ENCODE measurements at regions of chr12 and their contacts with region 1.

Region 1: GRCh38 chr12:109093022-109093918 is at the start of gene ALKBH2:
- DNase-seq: peak; percentile 72
- ATAC-seq: peak; percentile 73
- H3K4me3 ChIP-seq: peak within 1 kb of the TSS; percentile 77
- H3K27ac ChIP-seq: peak within 1 kb of the TSS; percentile 77
- H3K4me1 ChIP-seq: peaks cover 7% of the 10 kb centered on the region
- H3K27me3 ChIP-seq: no peaks in the 10 kb centered on the region
- CTCF ChIP-seq: peak; percentile 98 to 99 (median 98); a peak in 5 of 6 replicates
- EP300 ChIP-seq: no peak
- POLR2A ChIP-seq: peak; percentile 97
- RAD21 ChIP-seq: peak; percentile 75
- polyA plus RNA-seq, gene ALKBH2: 5.6 to 8.8 TPM

Region 2: DNA sequence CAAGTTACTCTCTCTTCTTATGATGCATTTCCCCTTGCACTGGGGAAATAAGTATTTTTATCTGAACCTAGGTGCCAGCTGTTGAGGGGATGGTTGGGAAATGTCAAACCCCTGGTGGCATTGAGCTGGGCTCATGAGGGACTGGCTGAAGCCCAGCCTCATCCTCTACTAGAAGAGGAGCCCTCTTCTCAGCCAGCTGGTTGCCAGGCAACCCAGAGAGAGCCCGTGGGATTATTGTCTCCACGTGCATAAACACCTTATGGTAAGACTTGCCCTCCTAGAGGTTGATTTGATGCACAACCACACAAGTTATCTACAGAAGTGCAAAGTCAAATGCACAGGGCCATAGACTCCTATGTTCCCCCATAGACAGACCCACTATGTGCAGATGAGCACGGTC is 874.3 kb before region 1 on chr12:
- CTCF ChIA-PET with region 1: no interaction called
- POLR2A ChIA-PET with region 1: no interaction called
- RAD21 ChIA-PET with region 1: no interaction called
- SMC1A ChIA-PET with region 1: no interaction called
- in situ Hi-C with region 1: no loop called
- intact Hi-C with region 1: no loop called
- DNase-seq: no peak
- ATAC-seq: no peak
- H3K4me3 ChIP-seq: no peak overlapping the region
- H3K27ac ChIP-seq: no peak overlapping the region
- H3K4me1 ChIP-seq: no peaks in the 10 kb centered on the region
- H3K27me3 ChIP-seq: peaks cover 0 to 2% of the 10 kb centered on the region in 2 experiments; a peak in 2 of 4 replicates
- CTCF ChIP-seq: no peak
- EP300 ChIP-seq: no peak
- POLR2A ChIP-seq: no peak
- RAD21 ChIP-seq: no peak

Region 3: DNA sequence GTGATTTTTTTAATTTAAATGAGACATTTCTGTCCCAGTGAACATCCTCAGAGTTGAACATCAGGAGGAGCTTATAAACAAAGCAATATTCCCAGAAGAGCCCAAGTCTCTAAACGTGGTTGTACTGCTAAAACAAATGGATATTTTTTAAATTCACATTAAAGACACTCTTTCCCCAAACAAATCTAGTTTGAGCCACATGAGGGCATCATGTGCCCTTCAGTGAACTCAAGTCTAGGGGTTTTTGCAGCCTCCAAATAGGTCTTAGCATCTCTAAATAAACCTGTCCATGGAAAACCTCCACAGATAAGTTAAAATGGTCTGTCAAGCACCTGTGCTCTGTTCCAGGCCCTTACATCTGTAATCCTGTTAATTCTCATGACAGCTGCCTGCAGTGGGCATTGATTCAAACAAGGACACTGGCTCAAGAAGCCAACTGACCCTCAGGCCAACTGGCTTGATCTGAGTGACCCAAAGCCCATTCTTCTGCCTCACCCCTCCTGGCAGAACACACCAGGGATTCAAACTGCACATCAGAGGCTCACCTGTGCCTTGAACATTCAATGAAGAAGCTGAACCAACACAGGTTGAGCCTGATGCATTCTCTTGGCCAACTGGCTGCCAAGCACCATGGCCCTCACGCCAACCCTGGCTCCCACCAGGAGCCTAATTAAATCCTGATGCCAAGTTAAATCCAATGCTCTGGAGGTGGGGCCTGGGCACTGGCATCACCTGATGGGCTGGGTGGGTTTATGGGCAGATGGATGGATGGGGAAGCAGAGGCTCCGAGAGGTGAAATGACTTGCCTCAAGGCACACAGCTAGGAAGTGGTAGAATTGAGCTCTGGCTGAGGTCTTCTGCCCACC is 522.3 kb before region 1 on chr12:
- CTCF ChIA-PET with region 1: interaction called, 3 read pairs
- POLR2A ChIA-PET with region 1: no interaction called
- RAD21 ChIA-PET with region 1: interaction called, 5 read pairs
- SMC1A ChIA-PET with region 1: no interaction called
- in situ Hi-C with region 1: loop called (anchors 5 kb)
- intact Hi-C with region 1: loop called (anchors 2 kb)
- DNase-seq: no peak
- ATAC-seq: no peak
- H3K4me3 ChIP-seq: no peak overlapping the region
- H3K27ac ChIP-seq: peak overlapping the region; percentile 100
- H3K4me1 ChIP-seq: peaks cover 89% of the 10 kb centered on the region
- H3K27me3 ChIP-seq: no peaks in the 10 kb centered on the region
- CTCF ChIP-seq: peak; percentile 42 to 53 (median 49); a peak in 4 of 6 replicates
- EP300 ChIP-seq: 0 out of 4 replicates have a peak, but pooled peaks of 1 of the 2 experiments have one; percentile 10
- POLR2A ChIP-seq: no peak
- RAD21 ChIP-seq: peak; percentile 66

Region 4: DNA sequence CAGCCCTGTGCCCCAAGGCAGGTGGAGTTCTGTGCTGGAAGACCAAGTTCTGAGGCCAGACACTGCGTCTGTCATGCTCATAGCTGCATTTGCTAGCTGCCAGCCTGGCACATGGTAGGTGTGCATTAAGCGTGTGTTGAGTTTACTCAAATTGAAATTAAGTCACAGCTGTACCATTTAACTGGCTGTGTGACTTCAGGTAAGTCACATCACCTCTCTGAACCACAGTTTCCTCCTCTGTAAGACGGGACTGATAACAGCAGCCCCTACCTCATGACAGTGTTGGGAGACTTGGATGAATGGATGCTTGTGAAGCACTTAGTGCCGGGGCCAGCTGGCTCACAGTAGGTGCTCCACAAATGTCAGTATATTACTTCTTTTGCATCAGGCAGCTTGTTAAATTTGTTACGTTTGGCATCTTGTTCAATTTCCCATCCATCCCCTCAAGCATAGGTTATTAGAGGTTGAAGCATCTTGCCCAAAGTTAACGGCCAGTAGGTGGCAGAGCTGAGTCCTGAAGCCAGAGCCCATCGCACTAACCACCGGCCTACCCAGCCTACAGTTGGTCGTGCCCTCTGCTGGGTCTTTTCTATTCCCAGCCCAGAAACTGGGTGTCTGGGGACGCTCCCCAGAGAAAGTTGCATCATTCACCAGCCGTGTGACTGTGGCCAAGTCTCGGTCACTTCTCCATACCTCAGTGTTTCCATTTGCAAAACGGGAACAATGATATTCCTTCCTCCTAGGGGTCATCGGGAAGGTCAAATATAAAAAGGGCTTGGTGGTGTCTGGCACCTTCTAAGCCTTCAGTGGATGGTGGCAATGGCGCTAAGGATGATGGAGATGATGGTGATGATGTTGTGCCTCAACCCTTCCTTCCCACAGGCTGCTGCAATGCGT is 208.9 kb before region 1 on chr12:
- CTCF ChIA-PET with region 1: interaction called, 30 read pairs
- POLR2A ChIA-PET with region 1: interaction called, 3 read pairs
- RAD21 ChIA-PET with region 1: no interaction called
- SMC1A ChIA-PET with region 1: interaction called, 10 read pairs
- in situ Hi-C with region 1: loop called (anchors 5 kb)
- intact Hi-C with region 1: loop called (anchors 1 kb)
- DNase-seq: no peak
- ATAC-seq: peak; percentile 94
- H3K4me3 ChIP-seq: no peak overlapping the region
- H3K27ac ChIP-seq: no peak overlapping the region
- H3K4me1 ChIP-seq: peaks cover 4% of the 10 kb centered on the region; the same call in 1 of the 2 replicates
- H3K27me3 ChIP-seq: no peaks in the 10 kb centered on the region
- CTCF ChIP-seq: peak; percentile 65 to 81 (median 78)
- EP300 ChIP-seq: no peak
- POLR2A ChIP-seq: no peak
- RAD21 ChIP-seq: peak; percentile 47

Region 5: DNA sequence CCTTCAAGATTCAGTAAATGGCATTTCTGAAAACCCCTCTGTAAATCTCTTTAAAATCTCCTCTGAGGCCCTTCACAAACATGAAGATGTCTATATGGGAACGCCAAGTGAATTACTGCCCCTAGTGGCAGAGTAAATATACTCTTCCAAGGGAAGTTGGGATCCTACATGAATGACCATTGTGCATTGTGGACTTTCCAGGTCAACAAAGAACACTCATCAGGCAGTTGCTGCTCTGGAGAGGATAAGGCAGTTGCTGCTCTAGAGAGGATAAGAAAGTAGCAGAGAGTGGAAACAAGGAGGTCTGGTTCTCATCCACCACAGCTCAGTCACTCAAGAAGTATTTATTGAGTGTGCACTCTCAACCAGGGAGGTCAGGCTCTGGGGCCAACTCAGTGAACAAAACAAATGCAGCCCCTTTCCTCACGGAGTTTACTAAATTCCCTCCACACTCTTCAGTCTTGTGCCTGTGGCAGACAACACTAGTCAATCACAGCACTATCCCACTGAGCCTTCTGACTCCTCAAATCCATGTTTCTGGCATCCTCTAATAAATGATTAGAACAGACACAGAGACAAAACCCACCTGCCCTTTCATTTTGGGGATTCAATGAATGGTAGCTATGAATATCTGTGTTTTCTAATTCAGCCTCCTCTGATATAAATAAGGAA is 125.3 kb before region 1 on chr12:
- CTCF ChIA-PET with region 1: interaction called, 3 read pairs
- POLR2A ChIA-PET with region 1: no interaction called
- RAD21 ChIA-PET with region 1: interaction called, 3 read pairs
- SMC1A ChIA-PET with region 1: no interaction called
- in situ Hi-C with region 1: no loop called
- intact Hi-C with region 1: loop called (anchors 5 kb)
- DNase-seq: no peak
- ATAC-seq: peak; percentile 51; the same call in 2 of the 3 replicates
- H3K4me3 ChIP-seq: no peak overlapping the region
- H3K27ac ChIP-seq: no peak overlapping the region
- H3K4me1 ChIP-seq: no peaks in the 10 kb centered on the region
- H3K27me3 ChIP-seq: no peaks in the 10 kb centered on the region
- CTCF ChIP-seq: peak; percentile 30 to 60 (median 45)
- EP300 ChIP-seq: no peak
- POLR2A ChIP-seq: no peak
- RAD21 ChIP-seq: no peak

Region 6: DNA sequence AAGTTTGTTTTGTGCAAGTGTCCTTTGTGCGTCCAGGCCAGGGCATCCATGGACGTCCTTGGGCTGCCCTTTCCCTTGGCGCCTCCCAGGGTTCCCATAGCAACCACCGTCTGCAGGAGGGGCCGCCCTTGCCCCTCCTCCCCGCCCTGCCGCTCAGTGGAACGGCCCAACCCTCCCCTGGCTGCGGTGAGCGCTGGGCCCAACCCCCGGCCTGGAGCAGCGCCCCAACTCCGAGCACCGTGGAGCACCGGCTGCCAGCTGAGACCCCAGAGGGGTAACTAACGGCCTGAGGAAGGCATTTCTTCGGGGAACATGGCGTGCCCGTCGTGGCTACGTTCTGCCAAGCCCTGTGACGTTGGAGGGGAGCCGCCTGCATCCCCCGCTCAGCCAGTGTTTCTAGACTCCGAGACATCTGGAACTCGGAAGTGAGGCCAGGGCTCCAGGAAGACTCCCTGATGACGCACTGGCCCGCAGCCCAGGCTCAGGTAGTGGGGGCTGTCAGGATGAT is 17.8 kb after region 1 on chr12:
- CTCF ChIA-PET with region 1: interaction called, 19 read pairs
- POLR2A ChIA-PET with region 1: no interaction called
- RAD21 ChIA-PET with region 1: no interaction called
- SMC1A ChIA-PET with region 1: no interaction called
- in situ Hi-C with region 1: no loop called
- intact Hi-C with region 1: no loop called
- DNase-seq: no peak
- ATAC-seq: no peak; the same call in 2 of the 3 replicates
- H3K4me3 ChIP-seq: peak overlapping the region; percentile 37; the same call in 1 of the 2 replicates
- H3K27ac ChIP-seq: no peak overlapping the region
- H3K4me1 ChIP-seq: no peaks in the 10 kb centered on the region
- H3K27me3 ChIP-seq: no peaks in the 10 kb centered on the region
- CTCF ChIP-seq: no peak
- EP300 ChIP-seq: no peak
- POLR2A ChIP-seq: peak; percentile 69
- RAD21 ChIP-seq: no peak

Measured in GM12878 (cell line).